ENCODE measurements at regions of chr2 and their contacts with region 1.

Region 1: DNA sequence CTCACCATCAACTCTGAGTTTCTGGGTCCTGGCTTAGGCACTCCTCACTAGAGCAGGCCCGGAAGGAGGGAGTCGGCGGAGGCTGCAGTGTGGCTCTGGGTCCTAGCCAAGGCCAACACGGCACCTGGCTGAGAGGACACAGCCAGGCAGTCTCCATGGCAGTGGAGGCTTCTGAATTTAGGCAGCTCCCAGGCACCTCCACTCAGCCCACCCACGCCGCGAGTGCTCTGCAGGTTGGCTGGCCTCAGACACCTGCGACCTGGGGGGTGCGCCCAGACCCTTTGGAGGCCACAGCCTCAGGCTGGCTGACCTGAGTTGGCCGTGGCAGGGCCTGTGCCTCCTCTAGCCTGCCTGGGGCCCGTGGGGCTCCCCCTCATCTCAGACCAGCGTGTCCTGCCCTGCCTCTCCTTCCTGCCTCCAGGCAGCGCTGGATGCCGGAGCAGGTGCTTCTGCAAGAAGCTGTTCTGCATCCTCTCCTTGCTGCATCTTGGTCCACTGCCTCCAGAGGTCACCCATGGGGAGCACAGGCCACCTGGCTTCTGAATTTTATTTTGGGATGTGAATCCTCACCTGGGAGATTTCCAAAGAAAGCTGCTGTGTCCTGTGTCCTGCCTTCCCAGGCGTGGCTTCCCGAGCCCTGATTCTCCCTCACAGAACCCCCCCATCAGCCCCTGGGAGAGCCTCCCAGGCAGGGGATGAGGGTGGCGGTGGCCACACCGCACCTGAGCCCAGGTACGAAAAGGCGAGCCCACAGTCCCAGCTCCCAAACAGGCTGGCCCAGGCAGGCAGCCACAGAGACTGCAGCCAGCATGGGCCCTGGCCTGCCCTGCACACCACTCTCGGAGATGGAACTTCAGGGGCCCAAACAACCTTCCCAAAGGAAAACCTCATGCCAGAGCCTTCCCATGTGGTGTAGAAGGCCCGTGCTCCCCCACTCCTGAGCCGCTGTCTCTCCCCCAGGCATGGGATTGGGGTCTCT is 23.4 kb downstream of the AQP12A start:
- DNase-seq: no peak
- H3K4me3 ChIP-seq: no peak overlapping the region
- H3K4me1 ChIP-seq: no peaks in the 10 kb centered on the region
- H3K27me3 ChIP-seq: no peaks in the 10 kb centered on the region

Region 2: GRCh38 chr2:240663546-240664190 is 51.4 kb before region 1 on chr2:
- in situ Hi-C with region 1: loop called (anchors 10 kb)
- DNase-seq: no peak
- H3K4me3 ChIP-seq: no peak overlapping the region
- H3K4me1 ChIP-seq: no peaks in the 10 kb centered on the region
- H3K27me3 ChIP-seq: peaks cover 27% of the 10 kb centered on the region